Right ventricle myocardium inferior (tissue), 1 donor: ENCODE measurements at regions of chr4 and their contacts with region 1.

Region 1: GRCh38 chr4:45036677-45037076 is 310.3 kb upstream of the GNPDA2 start:
- DNase-seq: no peak
- ATAC-seq: no peak

Region 2: DNA sequence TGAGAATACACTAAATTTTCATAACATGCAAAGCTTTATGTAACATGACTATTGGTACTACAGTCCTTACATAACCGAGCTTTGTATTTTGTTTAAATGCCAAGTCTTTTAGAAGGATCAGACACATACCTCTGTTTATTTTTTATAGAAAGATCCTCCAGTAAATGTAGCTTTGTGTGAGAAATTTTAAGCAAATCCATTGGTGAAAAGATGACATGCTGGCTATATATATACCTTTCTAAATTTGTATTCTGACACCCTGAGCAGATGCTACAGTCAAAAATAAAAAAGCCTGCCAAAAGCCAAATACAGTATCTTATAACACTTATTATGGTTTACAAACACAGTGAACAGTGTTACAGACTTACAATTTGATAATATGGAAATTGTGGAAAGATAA is 385.3 kb before region 1 on chr4 and contains the start of gene YIPF7:
- intact Hi-C with region 1: no loop called
- DNase-seq: no peak
- ATAC-seq: no peak
- total RNA-seq, gene YIPF7: 1.4 TPM

Region 3: GRCh38 chr4:45172636-45173035 is 136.0 kb after region 1 on chr4:
- intact Hi-C with region 1: no loop called
- DNase-seq: no peak
- ATAC-seq: no peak

Region 4: DNA sequence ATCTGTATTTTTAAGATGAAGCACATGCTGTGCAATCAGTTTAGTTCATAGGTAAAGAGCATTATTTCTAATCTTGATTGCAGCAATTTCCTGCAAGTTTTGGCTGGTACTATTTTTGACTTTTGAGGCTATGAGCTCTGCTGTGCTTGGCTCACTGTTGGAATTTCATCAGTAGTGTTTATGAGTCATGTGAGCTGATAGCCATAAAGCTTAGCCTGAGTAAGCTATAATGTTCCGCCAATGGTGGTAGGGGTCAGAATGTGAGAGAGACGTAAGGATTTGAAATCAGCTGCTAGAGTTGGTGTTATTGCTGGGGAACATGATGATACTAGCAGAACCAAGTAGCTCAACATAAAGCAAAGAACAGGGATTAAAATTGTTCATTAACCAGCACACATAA is 280.6 kb after region 1 on chr4:
- intact Hi-C with region 1: loop called (anchors 10 kb)
- DNase-seq: no peak
- ATAC-seq: peak; percentile 79